WTC11 (cell line): ENCODE measurements at regions of chr11 and their contacts with region 1.

Region 1: GRCh38 chr11:60363542-60364510 is 14.5 kb upstream of the MS4A7 start:
- DNase-seq: peak; percentile 65
- ATAC-seq: peak; percentile 74
- H3K4me3 Mint-ChIP-seq: peak overlapping the region; percentile 46
- H3K27ac Mint-ChIP-seq: peak overlapping the region; percentile 75
- H3K4me1 Mint-ChIP-seq: peaks cover 57% of the 10 kb centered on the region
- H3K27me3 Mint-ChIP-seq: peaks cover 4% of the 10 kb centered on the region; the same call in 1 of the 2 replicates
- CTCF ChIP-seq: peak; percentile 72

Region 2: DNA sequence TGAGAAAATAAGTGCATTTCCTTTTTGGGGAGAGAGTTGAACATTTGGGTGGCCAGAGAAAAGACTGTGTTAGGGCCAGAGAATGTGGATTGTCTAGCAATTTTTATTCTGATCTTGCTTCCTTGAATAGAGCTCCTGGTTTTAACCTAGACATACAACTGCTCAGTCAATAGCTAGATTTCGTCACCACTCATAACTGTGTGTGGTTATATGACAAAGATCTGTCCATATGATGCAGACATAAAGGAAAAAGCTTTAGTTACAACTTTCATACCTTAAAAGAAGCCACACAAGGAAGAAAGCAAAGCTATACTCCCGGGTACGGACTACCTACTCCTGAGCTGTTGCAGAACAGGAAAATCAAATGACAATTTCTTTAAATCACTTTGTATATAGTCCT is 218.1 kb before region 1 on chr11:
- CTCF ChIA-PET with region 1: no interaction called
- POLR2A ChIA-PET with region 1: no interaction called
- DNase-seq: no peak
- ATAC-seq: no peak
- H3K4me3 Mint-ChIP-seq: no peak overlapping the region
- H3K27ac Mint-ChIP-seq: no peak overlapping the region
- H3K4me1 Mint-ChIP-seq: no peaks in the 10 kb centered on the region
- H3K27me3 Mint-ChIP-seq: no peaks in the 10 kb centered on the region; the same call in 1 of the 2 replicates
- CTCF ChIP-seq: no peak

Region 3: GRCh38 chr11:60345489-60345888 is 18.3 kb before region 1 on chr11:
- CTCF ChIA-PET with region 1: interaction called, 23 read pairs
- POLR2A ChIA-PET with region 1: no interaction called
- DNase-seq: peak; percentile 58
- ATAC-seq: peak; percentile 79
- H3K4me3 Mint-ChIP-seq: no peak overlapping the region
- H3K27ac Mint-ChIP-seq: no peak overlapping the region
- H3K4me1 Mint-ChIP-seq: peaks cover 26% of the 10 kb centered on the region
- H3K27me3 Mint-ChIP-seq: no peaks in the 10 kb centered on the region
- CTCF ChIP-seq: peak; percentile 46

Region 4: DNA sequence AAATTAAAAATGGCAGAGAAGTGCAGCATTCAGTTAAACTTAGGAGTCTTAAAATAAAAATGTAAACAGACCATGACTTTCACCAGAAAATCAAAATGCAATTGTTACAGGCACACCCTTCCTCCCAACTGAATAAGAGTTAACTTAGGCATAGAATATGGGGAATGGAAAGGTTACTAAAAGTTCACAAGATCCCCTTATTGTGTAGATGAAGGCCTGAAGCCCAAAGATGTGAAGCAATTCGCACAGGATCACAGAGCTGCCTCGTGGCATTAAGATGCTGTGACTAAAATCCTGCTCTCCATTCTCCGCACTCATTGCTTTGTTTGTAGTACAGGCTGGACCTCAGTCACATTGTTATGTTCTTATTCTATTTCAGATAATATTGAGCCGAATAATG is 69.6 kb after region 1 on chr11:
- CTCF ChIA-PET with region 1: no interaction called
- POLR2A ChIA-PET with region 1: no interaction called
- DNase-seq: no peak
- ATAC-seq: no peak
- H3K4me3 Mint-ChIP-seq: no peak overlapping the region
- H3K27ac Mint-ChIP-seq: no peak overlapping the region
- H3K4me1 Mint-ChIP-seq: peaks cover 22% of the 10 kb centered on the region
- H3K27me3 Mint-ChIP-seq: peaks cover 5% of the 10 kb centered on the region; the same call in 1 of the 2 replicates
- CTCF ChIP-seq: no peak

Region 5: GRCh38 chr11:60589607-60590006 is 225.8 kb after region 1 on chr11:
- CTCF ChIA-PET with region 1: interaction called, 11 read pairs
- POLR2A ChIA-PET with region 1: no interaction called
- DNase-seq: no peak
- ATAC-seq: 0 out of 2 replicates have a peak, but pooled peaks have one; percentile 26
- H3K4me3 Mint-ChIP-seq: no peak overlapping the region
- H3K27ac Mint-ChIP-seq: no peak overlapping the region
- H3K4me1 Mint-ChIP-seq: peaks cover 9% of the 10 kb centered on the region
- H3K27me3 Mint-ChIP-seq: no peaks in the 10 kb centered on the region
- CTCF ChIP-seq: no peak

Region 6: DNA sequence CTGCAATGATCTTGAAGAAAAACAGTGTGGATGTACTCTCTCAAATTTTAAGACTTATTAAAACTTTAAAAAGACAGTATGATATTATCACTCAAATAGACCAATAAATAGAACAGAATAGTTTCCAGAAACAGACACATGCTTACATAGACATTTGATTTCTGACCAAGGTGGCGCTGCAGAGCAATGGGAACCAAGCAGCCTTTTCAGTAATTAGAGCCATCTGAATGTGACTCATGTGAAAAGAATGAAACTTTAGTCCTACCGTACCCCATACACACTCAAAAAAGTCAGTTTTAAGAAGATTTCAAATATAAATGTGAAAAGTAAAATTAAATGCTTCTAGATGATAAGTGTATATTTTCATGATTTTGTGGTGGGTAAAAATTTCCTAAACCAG is 261.4 kb after region 1 on chr11:
- CTCF ChIA-PET with region 1: interaction called, 32 read pairs
- POLR2A ChIA-PET with region 1: no interaction called
- DNase-seq: peak; percentile 50
- ATAC-seq: peak; percentile 74
- H3K4me3 Mint-ChIP-seq: no peak overlapping the region
- H3K27ac Mint-ChIP-seq: no peak overlapping the region
- H3K4me1 Mint-ChIP-seq: peaks cover 4% of the 10 kb centered on the region
- H3K27me3 Mint-ChIP-seq: no peaks in the 10 kb centered on the region
- CTCF ChIP-seq: no peak